Posterior cingulate gyrus (tissue), 11 donors: ENCODE measurements at regions of chr19 and their contacts with region 1.

Region 1: GRCh38 chr19:36973021-36973843 is 57.1 kb downstream of the ZNF568 start:
- DNase-seq: peak; percentile 77 to 97 (median 86)

Region 2: DNA sequence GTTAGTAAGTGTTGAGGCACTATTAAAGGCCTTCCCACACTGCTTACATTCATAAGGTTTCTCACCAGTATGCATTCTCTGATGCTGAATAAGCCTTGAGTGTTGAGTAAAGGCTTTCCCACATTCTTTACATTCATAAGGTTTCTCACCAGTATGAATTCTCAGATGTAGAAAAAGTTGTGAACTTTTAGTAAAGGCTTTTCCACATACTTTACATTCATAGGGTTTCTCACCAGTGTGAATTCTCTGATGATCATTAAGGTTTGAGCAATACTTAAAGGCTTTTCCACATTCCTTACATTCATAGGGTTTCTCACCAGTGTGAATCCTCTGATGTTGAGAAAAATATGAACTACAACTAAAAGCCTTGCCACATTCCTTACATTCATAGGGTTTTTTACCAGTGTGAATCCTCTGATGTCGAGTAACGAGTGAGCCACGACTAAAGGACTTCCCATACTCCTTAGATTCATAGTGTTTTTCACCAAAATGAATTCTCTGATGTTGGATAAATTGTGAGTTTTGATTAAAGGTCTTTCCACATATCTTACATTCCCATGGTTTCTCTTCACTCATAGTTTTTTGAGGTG is 81.4 kb before region 1 on chr19:
- intact Hi-C with region 1: no loop called
- DNase-seq: no peak

Region 3: DNA sequence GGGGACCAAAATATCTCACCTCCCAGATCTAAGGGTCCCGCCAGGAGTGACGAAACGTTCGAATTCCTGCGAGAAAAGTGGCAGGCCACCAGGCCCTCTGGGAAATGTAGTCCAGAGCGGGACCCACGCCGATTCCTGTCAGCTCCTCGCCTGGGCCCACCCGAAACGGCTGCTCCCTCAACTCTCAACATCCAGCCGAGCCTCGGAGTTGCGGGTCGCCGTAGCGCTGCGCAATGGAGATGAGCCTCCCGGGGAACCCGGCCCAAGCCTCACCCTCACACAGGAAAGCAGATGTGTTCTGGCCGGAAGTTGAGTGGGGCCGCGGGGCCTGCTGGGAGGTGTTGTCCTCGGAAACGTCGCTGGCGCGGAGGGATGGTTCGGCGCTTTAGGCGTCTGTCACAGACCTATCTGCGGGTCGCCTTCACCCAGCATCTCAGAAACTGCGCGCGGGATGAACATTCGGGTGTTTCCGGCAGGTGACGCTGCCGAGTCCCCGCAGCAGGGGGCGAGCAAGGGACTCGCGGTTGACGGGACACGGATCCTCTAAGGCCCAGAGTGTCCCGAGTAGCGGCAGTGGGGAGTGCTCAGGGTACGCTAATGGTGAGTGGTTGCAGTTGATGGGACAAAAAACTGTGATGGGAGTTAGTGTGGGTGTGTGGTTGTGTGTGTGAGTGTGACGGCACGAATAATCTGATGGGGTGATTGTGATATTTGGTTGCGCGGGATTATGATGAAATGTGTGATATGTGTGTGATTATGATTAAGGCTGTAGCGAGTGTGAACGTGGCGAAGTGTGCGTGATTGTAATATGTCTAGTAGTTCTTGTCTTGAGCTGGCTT is 57.0 kb before region 1 on chr19 and contains the starts of genes ZNF568 and ZNF829:
- intact Hi-C with region 1: loop called (anchors 5 kb)
- DNase-seq: peak; percentile 84 to 99 (median 93)

Region 4: GRCh38 chr19:37077934-37078725 is 104.9 kb after region 1 on chr19 and contains the start of gene ZNF420:
- intact Hi-C with region 1: loop called (anchors 5 kb)
- DNase-seq: peak; percentile 87 to 99 (median 92)

Region 5: DNA sequence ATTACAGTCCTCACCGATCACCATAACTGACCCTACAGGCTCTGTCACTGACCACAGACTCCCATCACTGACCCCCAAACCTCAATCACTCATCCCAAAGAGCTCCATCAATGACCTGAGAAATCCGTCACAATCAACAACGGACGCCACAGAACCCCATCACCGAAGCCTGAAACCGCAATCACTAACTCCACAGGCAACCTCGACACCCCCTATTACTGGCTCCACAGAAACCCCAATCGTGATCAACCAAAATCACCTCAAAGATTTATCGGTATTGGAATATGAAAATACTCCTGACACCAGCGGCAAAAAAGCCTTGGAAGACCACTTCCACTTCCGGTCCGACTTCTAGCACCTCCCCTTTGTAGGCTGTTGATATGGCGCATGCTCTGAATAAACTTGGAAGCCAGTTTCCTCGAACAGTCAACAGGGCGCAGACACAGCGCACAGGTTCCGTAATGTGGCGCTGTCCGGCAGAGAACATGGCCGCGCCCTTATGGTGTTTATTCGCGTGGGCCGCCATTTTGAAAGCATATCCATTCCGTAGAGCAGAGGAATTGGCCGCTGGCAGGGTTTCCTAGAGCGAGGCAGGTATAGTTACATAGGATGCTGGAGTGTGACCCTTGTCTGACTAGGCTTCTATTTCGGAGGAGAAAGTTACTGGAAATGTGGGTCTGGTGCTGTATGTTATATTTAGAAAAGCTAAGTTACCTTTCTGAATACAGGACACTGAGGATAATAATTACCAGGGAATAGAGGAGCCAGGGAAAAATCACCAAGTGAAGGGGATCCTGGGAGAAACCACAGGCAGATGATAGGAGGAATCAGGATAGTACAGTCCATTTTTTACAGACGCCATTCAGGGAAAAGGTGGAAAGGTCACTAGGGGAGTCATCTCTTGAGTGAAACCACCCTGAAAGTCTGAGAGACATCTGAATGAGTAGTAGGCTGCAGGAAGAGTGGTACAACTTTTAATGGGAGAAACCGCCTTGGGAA is 199.4 kb after region 1 on chr19 and contains the start of gene ZNF585A:
- intact Hi-C with region 1: loop called (anchors 5 kb)
- DNase-seq: peak; percentile 84 to 99 (median 92)

Region 6: DNA sequence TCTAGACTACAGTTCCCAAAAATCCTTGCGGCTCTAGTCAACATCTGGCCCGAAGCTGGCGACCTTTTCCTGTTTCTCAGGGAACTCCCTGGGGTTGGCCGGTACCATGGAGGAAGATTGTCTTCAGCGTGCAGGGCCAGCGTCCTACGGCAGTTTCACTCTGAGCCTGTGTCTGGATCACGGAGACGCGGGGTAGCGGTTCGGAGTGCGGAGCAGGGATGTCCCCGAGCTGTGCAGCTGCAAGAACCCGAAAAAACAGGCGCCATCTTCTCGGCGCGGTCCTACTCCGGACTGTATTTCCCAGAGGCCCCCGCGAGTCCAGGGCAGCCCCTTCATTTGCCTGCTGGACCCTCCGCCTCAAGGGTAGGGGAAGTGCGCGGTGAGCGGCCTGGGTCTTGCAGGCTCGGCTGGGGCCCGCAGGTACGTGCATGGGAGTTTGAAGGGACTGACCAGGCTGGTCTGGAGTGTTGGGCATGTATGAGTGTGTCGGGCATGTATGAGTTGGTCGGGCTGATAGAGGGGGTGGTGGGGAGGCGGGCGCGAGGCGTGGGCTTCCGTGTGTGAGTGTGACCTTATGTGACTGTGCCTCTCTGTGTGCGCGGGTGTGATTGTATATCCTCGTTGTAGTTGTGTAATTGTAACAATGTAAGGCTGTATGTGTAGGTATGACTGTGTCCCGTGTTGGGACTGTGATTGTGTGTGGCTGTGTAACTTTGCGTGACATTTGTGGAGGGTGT is 244.8 kb after region 1 on chr19 and contains the start of gene ZNF383:
- intact Hi-C with region 1: loop called (anchors 5 kb)
- DNase-seq: peak; percentile 83 to 98 (median 90)